ENCODE measurements at regions of chr5 and their contacts with region 1.

Region 1: DNA sequence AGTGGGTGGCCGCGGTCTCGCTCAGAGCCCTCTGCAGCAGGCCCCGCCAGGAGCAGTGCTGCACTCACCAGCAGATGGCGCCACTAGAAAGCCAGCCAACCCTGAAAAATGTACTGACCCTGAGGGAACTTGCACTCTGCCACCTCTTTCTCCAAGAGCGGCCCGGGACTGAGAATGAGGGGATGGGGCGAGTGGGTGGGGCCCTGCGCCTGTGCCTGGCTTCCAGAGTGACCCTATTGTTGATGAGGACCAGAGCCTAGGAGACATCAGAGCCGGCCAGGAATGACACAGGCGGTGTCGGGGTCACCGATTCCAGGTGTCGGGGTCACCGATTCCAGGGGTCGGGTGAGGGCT is 2.9 kb upstream of the IL17B start:
- H3K4me3 ChIP-seq: no peak overlapping the region
- H3K27ac ChIP-seq: no peak overlapping the region
- H3K4me1 ChIP-seq: no peaks in the 10 kb centered on the region
- CTCF ChIP-seq: peak; percentile 89

Region 2: GRCh38 chr5:149422366-149423048 is 40.5 kb after region 1 on chr5:
- CTCF ChIA-PET with region 1: interaction called, 205 read pairs
- POLR2A ChIA-PET with region 1: no interaction called
- H3K4me3 ChIP-seq: no peak overlapping the region
- H3K27ac ChIP-seq: no peak overlapping the region
- H3K4me1 ChIP-seq: no peaks in the 10 kb centered on the region
- CTCF ChIP-seq: no peak

Region 3: GRCh38 chr5:149442563-149443182 is 60.7 kb after region 1 on chr5:
- CTCF ChIA-PET with region 1: interaction called, 40 read pairs
- POLR2A ChIA-PET with region 1: no interaction called
- H3K4me3 ChIP-seq: no peak overlapping the region
- H3K27ac ChIP-seq: no peak overlapping the region
- H3K4me1 ChIP-seq: no peaks in the 10 kb centered on the region
- CTCF ChIP-seq: peak; percentile 88

Region 4: DNA sequence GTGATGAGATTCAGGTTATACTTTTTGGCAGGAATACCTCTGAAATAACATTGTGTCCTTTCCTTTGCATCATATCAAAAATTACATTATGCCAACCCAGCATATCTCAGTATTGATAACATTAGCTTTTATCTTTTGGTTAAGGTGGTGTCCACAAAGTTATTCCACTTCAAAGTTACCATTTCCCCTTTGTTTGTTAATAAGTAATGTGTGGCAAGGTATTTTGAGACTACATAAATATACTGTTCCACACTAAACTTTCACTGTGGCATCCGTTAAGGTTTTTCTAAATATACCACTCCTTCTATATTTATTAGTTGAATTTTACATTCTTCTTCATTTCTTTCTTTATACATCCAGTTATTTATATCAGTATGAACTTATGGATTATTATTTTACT is 185.3 kb after region 1 on chr5:
- CTCF ChIA-PET with region 1: interaction called, 29 read pairs
- POLR2A ChIA-PET with region 1: no interaction called
- H3K4me3 ChIP-seq: no peak overlapping the region
- H3K27ac ChIP-seq: no peak overlapping the region
- H3K4me1 ChIP-seq: no peaks in the 10 kb centered on the region
- CTCF ChIP-seq: no peak

Measured in HEK293 (cell line).